Heart left ventricle (tissue), 16 donors: ENCODE measurements at regions of chr1 and their contacts with region 1.

Region 1: GRCh38 chr1:26695356-26696118 is at the start of gene ARID1A:
- DNase-seq: peak; percentile 96 to 99 (median 96)
- ATAC-seq: peak; percentile 65 to 79 (median 74)
- H3K4me3 ChIP-seq: peak within 1 kb of the TSS; percentile 80 to 96 (median 92)
- H3K27ac ChIP-seq: peak within 1 kb of the TSS; percentile 89 to 98 (median 96)
- H3K4me1 ChIP-seq: peaks cover 16 to 59% (median 49%) of the 10 kb centered on the region in 12 donors
- H3K27me3 ChIP-seq: peaks cover 0 to 4% (median 0%) of the 10 kb centered on the region in 9 donors
- CTCF ChIP-seq: peak in 4 of 12 donors; percentile 8 to 27 (median 14)
- POLR2A ChIP-seq: peak in 1 of 2 donors; percentile 61
- total RNA-seq, gene ARID1A: 29.0 to 73.9 (median 49.9) TPM

Region 2: DNA sequence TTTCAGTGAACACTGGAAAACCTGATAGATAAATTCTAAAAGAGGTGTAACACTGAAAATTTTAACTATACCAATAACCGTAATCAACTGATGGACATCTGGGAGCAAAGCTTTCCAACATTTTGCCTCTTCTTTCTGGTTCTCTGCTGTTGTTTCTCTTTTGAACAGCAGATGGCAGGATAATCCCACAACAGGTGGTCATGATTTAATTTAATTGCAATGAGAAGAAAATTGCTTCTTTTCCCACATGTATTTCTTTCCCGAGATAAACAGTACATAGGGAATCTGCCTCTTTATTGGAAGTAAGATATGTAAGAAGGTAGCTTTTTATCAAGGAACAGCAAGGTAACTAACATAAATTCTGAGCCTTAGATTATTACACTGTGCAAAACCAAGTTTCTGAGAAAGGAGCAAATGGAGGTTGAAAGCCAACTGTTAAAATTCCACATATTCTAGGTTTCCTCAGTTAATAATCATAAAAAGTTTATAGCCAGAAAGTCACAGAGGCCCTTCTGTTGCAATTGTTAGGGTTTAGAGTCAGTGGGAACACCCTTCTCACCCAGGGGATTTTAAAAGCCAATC is 93.1 kb before region 1 on chr1:
- intact Hi-C with region 1: loop called in 2 of 10 experiments (anchors 5 kb)
- DNase-seq: peak in 2 of 5 donors; percentile 35 to 36
- ATAC-seq: peak in 2 of 4 donors; percentile 28 to 42
- H3K4me3 ChIP-seq: no peak overlapping the region
- H3K27ac ChIP-seq: no peak overlapping the region
- H3K4me1 ChIP-seq: peaks cover 0 to 23% (median 0%) of the 10 kb centered on the region in 12 donors
- H3K27me3 ChIP-seq: no peaks in the 10 kb centered on the region
- CTCF ChIP-seq: peak; percentile 79 to 95 (median 90)
- POLR2A ChIP-seq: no peak

Region 3: GRCh38 chr1:26723013-26723991 is 27.8 kb after region 1 on chr1:
- intact Hi-C with region 1: loop called in 2 of 10 experiments (anchors 2 kb)
- DNase-seq: peak; percentile 84 to 94 (median 91)
- ATAC-seq: peak; percentile 98
- H3K4me3 ChIP-seq: peak overlapping the region in 7 of 12 donors; percentile 4 to 39 (median 15)
- H3K27ac ChIP-seq: peak overlapping the region in 11 of 12 donors; percentile 38 to 72 (median 61)
- H3K4me1 ChIP-seq: peaks cover 28 to 100% (median 87%) of the 10 kb centered on the region in 12 donors
- H3K27me3 ChIP-seq: no peaks in the 10 kb centered on the region
- CTCF ChIP-seq: no peak
- POLR2A ChIP-seq: no peak

Region 4: GRCh38 chr1:26744075-26744959 is 48.8 kb after region 1 on chr1:
- intact Hi-C with region 1: loop called in 5 of 10 experiments (anchors 5 kb)
- DNase-seq: peak; percentile 82 to 92 (median 87)
- ATAC-seq: peak; percentile 96 to 99 (median 98)
- H3K4me3 ChIP-seq: peak overlapping the region in 4 of 12 donors; percentile 6 to 40 (median 7)
- H3K27ac ChIP-seq: peak overlapping the region; percentile 75 to 94 (median 78)
- H3K4me1 ChIP-seq: peaks cover 11 to 99% (median 57%) of the 10 kb centered on the region in 12 donors
- H3K27me3 ChIP-seq: no peaks in the 10 kb centered on the region
- CTCF ChIP-seq: no peak
- POLR2A ChIP-seq: peak in 1 of 2 donors; percentile 44

Region 5: DNA sequence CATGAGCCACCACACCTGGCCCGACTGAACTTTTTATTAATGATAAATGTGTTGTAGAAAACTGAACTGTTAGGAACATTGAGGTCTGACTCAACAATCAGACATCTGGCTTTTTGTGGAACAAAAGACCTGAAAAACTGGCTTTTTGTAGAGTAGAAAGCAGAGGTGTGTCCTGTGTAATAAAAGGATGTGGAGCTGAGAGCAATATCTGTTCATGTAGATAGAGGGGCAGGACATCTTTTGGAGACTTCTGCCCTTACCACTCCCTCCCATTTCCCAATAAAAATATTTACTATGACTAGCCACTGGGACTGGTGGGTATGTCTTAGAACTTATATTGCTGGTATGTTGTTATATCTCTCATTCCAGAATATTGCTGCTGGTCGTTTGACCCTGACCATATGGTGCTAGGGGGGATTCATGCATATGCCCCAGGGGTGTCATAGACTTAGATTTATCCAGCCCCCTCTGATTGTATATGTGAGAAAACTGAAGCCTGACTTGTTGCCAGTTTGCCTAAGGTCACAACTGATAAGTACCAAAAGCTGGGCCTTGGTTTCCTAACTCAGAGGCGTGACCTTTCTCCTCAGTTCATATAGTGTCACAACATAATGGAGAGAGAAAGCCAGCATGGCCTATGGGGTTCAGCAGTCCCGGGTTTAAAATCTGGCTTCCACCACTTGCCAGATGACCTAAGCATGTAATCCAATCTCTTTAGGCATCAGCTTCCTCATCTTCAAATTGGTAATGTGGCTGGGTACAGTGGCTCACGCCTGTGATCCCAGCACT is 58.7 kb after region 1 on chr1:
- intact Hi-C with region 1: loop called in 2 of 10 experiments (anchors 2 to 5 kb)
- DNase-seq: no peak
- ATAC-seq: no peak
- H3K4me3 ChIP-seq: no peak overlapping the region
- H3K27ac ChIP-seq: peak overlapping the region in 8 of 12 donors; percentile 28 to 83 (median 66)
- H3K4me1 ChIP-seq: peaks cover 8 to 64% (median 53%) of the 10 kb centered on the region in 12 donors
- H3K27me3 ChIP-seq: no peaks in the 10 kb centered on the region
- CTCF ChIP-seq: no peak
- POLR2A ChIP-seq: no peak